BJ (cell line): ENCODE measurements at regions of chr3 and their contacts with region 1.

Region 1: GRCh38 chr3:171028025-171028778 is 1.7 kb upstream of the SLC2A2 start:
- DNase-seq: peak; percentile 49
- H3K4me3 ChIP-seq: peak overlapping the region; percentile 33
- H3K27me3 ChIP-seq: no peaks in the 10 kb centered on the region
- CTCF ChIP-seq: no peak

Region 2: DNA sequence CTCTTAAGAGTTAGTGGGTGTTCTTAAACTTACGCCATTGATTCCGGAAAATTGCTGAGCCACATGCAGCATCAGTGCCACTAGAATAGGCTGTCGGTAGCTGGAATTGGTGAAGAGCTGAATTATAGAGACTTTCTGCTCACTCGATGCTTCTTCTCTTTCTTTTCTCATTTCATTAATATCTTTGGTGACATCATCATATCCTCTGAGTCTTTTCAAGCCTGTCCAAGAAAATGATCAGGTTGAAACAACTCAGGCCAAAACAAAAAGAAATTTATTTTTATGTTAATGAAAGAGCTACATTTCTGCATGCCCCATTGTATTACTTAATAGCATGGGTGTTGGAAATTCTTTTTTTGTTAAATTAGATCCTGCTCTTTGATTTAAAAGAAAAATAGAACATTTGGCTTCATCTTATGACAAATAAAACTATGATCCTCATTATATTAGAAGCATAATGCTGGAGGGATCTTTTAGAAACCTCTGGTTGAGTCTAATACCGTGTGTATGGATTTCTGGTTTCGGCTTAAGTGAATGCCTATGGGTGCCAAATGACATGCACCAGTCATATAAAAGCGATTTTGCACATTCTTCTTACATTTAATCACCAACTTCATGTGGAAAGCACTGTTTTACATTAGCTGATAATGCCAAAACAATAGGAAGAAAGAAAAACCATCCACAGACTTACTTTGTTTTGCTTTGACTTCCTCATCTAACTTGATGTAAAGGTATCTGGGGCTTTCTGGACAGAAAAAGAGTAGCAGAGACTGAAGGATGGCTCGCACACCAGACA is 22.8 kb before region 1 on chr3:
- CTCF ChIA-PET with region 1: no interaction called
- POLR2A ChIA-PET with region 1: no interaction called
- DNase-seq: peak; percentile 46
- H3K4me3 ChIP-seq: no peak overlapping the region
- H3K27me3 ChIP-seq: no peaks in the 10 kb centered on the region
- CTCF ChIP-seq: no peak

Region 3: GRCh38 chr3:171056528-171056927 is 28.3 kb after region 1 on chr3:
- CTCF ChIA-PET with region 1: no interaction called
- POLR2A ChIA-PET with region 1: no interaction called
- DNase-seq: no peak
- H3K4me3 ChIP-seq: no peak overlapping the region
- H3K27me3 ChIP-seq: no peaks in the 10 kb centered on the region
- CTCF ChIP-seq: no peak

Region 4: DNA sequence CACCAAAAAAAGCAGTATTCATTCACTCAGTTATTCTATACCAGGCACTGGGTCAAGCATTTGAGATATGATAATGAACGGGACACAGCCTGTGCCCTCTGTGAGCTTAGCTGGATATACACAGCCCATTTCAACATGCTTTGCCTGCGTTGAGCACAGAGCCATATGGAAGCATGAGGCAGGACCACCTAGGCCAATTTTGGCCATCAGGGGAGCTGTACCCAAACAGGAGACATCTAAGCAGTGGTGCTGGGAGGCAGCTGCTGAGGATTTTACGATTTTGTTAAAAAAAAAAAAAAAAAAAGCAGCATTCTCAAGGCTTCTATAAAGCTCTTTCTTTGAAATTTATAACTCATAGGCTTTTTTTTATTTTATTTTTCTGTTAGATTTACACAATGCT is 85.5 kb after region 1 on chr3:
- CTCF ChIA-PET with region 1: no interaction called
- POLR2A ChIA-PET with region 1: no interaction called
- DNase-seq: no peak
- H3K4me3 ChIP-seq: no peak overlapping the region
- H3K27me3 ChIP-seq: no peaks in the 10 kb centered on the region
- CTCF ChIP-seq: 0 out of 2 replicates have a peak, but pooled peaks have one; percentile 15

Region 5: GRCh38 chr3:171295484-171296373 is 267.5 kb after region 1 on chr3:
- CTCF ChIA-PET with region 1: no interaction called
- POLR2A ChIA-PET with region 1: interaction called, 15 read pairs
- DNase-seq: no peak
- H3K4me3 ChIP-seq: no peak overlapping the region
- H3K27me3 ChIP-seq: no peaks in the 10 kb centered on the region
- CTCF ChIP-seq: no peak